Dendritic cell treated with granulocyte-macrophage colony-stimulating factor and Interleukin-4, amounts not matched to agents 40 ng/mL and 50 ng/mL, for 4 days (primary cell): ENCODE measurements at regions of chr12 and their contacts with region 1.

Region 1: DNA sequence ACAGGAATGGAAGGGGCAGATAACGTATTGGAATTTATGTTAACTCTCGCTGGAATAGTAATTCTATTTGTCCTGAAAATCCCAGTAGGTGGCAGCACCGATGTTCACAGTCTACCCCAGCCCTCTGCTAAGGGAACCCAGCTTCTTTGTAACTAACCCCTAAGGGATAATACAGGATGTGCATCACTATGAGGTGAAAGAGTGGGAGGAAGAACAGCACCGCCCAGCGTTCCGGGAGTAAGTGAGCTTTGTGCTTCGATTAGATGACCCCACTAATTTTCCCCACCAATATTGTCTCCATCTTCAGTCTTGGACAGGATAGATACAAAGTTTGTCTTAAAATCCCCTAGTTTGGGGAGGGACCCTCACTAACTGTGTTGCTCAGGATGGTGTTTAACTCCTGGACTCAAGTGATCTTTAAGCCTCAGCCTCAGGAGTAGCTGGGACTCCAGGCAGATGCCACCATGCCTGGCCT is 2.7 kb downstream of the SLC2A3 start:
- H3K4me3 Mint-ChIP-seq: no peak overlapping the region
- H3K27ac Mint-ChIP-seq: no peak overlapping the region
- H3K4me1 Mint-ChIP-seq: peaks cover 32% of the 10 kb centered on the region
- H3K27me3 Mint-ChIP-seq: no peaks in the 10 kb centered on the region

Region 2: GRCh38 chr12:7959701-7960121 is 26.4 kb after region 1 on chr12:
- intact Hi-C with region 1: loop called (anchors 1 kb)
- H3K4me3 Mint-ChIP-seq: peak overlapping the region; percentile 91
- H3K27ac Mint-ChIP-seq: peak overlapping the region; percentile 88
- H3K4me1 Mint-ChIP-seq: peaks cover 53% of the 10 kb centered on the region
- H3K27me3 Mint-ChIP-seq: no peaks in the 10 kb centered on the region

Region 3: GRCh38 chr12:7970475-7971252 is 37.4 kb after region 1 on chr12:
- intact Hi-C with region 1: loop called (anchors 5 kb)
- H3K4me3 Mint-ChIP-seq: peak overlapping the region; percentile 92
- H3K27ac Mint-ChIP-seq: peak overlapping the region; percentile 79
- H3K4me1 Mint-ChIP-seq: peaks cover 43% of the 10 kb centered on the region
- H3K27me3 Mint-ChIP-seq: no peaks in the 10 kb centered on the region

Region 4: GRCh38 chr12:7995266-7995963 is 62.1 kb after region 1 on chr12:
- intact Hi-C with region 1: loop called (anchors 1 kb)
- H3K4me3 Mint-ChIP-seq: no peak overlapping the region
- H3K27ac Mint-ChIP-seq: no peak overlapping the region
- H3K4me1 Mint-ChIP-seq: peaks cover 21% of the 10 kb centered on the region
- H3K27me3 Mint-ChIP-seq: no peaks in the 10 kb centered on the region